Endothelial cell of umbilical vein (primary cell): ENCODE measurements at regions of chr11 and their contacts with region 1.

Region 1: GRCh38 chr11:18634140-18635032 is at the start of gene SPTY2D1:
- DNase-seq: peak; percentile 99
- H3K4me3 ChIP-seq: peak within 1 kb of the TSS; percentile 79 to 99 (median 97)
- H3K27ac ChIP-seq: peak within 1 kb of the TSS; percentile 83
- H3K4me1 ChIP-seq: peaks cover 16% of the 10 kb centered on the region
- H3K27me3 ChIP-seq: peaks cover 0 to 1% of the 10 kb centered on the region in 2 experiments
- CTCF ChIP-seq: no peak
- POLR2A ChIP-seq: peak; percentile 96
- total RNA-seq, gene SPTY2D1: 13.7 and 18.7 TPM in 2 replicates

Region 2: DNA sequence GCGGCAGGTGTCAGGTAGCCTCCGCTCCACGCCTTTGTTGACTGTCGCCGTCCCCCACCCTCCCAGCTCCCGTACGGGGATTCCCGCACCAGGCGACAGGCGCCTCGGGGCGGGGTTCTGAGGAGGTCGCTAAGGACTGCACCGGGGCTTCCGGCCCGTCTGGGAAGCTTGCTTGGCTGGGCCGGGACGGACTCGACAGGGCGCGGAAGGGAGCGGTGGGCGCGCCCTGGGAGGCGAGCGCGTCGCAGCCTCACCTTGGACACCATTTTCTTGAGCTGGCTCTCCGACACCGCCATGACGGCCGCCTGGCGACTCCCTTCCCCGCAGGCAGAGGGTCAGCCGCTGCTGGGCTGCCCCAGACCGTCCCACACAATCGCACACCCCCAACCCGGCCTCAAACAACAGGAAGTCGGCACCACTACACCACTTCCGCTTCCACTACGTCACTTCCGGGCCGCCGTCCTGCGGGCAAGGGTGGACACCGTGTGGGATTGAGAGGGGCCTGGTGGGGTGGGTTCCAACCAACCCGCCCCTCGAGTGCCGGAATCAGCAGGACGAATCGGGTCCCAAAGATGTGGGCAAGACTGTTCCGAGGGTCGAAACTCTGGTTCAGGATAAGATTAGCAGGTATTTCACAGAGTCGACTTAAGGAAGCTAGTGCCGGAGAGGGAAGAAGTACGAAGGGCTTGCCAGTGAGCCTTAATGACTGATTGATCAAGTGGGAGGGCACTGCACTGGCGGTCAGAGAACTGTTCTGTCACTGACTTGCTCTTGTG is 107.7 kb before region 1 on chr11 and contains the start of gene TSG101:
- CTCF ChIA-PET with region 1: no interaction called
- POLR2A ChIA-PET with region 1: interaction called, 5 read pairs
- dilution Hi-C with region 1: no loop called
- intact Hi-C with region 1: loop called (anchors 1 kb)
- DNase-seq: peak; percentile 98
- H3K4me3 ChIP-seq: peak within 1 kb of the TSS; percentile 51 to 96 (median 74)
- H3K27ac ChIP-seq: peak within 1 kb of the TSS; percentile 99
- H3K4me1 ChIP-seq: peaks cover 15% of the 10 kb centered on the region
- H3K27me3 ChIP-seq: no peaks in the 10 kb centered on the region
- CTCF ChIP-seq: no peak
- POLR2A ChIP-seq: peak; percentile 96
- total RNA-seq, gene TSG101: 41.3 and 45.5 TPM in 2 replicates

Region 3: GRCh38 chr11:18588297-18589252 is 45.8 kb before region 1 on chr11 and contains the start of gene UEVLD:
- CTCF ChIA-PET with region 1: no interaction called
- POLR2A ChIA-PET with region 1: interaction called, 9 read pairs
- dilution Hi-C with region 1: no loop called
- intact Hi-C with region 1: loop called (anchors 1 kb)
- DNase-seq: peak; percentile 88
- H3K4me3 ChIP-seq: peak within 1 kb of the TSS; percentile 91 to 98 (median 94)
- H3K27ac ChIP-seq: peak within 1 kb of the TSS; percentile 65
- H3K4me1 ChIP-seq: peaks cover 17% of the 10 kb centered on the region
- H3K27me3 ChIP-seq: no peaks in the 10 kb centered on the region
- CTCF ChIP-seq: no peak
- POLR2A ChIP-seq: peak; percentile 87
- total RNA-seq, gene UEVLD: 19.1 and 22.5 TPM in 2 replicates

Region 4: DNA sequence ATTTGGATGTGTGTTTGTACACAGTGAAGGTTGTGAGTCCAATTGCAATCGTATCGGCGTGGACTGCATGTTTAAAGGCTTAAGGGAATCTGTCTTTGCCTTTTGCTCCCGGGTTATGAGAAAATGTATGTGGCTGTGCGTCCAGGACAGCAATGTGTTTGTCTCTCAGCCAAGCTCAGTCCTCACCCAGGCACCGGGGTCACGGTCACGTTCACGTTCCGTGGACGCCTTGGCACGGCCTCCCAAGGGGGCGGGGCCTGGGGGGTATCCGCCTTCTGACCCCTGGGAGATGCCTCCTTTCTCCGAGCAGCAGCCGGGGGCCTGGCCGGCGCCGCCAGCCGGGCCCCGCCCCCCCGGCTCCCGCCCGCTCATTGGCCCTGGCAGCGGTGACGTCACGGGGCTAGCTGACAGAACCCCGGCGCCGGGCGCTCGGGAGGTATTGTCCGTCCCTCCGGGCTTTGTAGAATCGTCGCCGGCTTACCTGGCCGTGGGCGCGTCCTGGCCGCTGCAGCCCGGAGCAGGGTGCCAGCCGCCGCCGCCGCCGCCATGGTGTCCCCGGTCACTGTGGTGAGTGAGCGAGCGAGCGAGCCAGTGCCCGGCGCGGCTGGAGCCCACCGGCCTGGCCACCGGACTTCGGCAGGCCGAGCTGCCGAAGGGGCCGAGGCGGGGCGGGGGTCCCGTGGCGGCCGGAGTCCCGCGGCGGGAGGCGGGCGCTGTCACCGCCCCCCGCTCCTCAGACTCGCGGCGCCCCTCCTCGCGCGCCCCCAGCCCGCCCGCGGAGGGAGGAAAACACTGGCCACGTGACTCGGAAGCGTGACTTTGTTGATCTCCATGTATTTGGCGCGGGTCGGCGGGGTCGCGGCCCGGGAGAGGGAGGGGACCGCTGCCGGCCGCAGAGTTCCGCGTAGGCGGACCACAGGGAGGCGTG is 64.2 kb after region 1 on chr11 and contains the start of gene TMEM86A:
- CTCF ChIA-PET with region 1: no interaction called
- POLR2A ChIA-PET with region 1: no interaction called
- dilution Hi-C with region 1: no loop called
- intact Hi-C with region 1: loop called (anchors 1 kb)
- DNase-seq: peak; percentile 88
- H3K4me3 ChIP-seq: peak within 1 kb of the TSS; percentile 30 to 59 (median 48)
- H3K27ac ChIP-seq: no peak within 1 kb of the TSS
- H3K4me1 ChIP-seq: peaks cover 11% of the 10 kb centered on the region
- H3K27me3 ChIP-seq: no peaks in the 10 kb centered on the region
- CTCF ChIP-seq: no peak
- POLR2A ChIP-seq: peak; percentile 32
- total RNA-seq, gene TMEM86A: 2.5 and 2.6 TPM in 2 replicates